ENCODE measurements at regions of chr16 and their contacts with region 1.

Region 1: DNA sequence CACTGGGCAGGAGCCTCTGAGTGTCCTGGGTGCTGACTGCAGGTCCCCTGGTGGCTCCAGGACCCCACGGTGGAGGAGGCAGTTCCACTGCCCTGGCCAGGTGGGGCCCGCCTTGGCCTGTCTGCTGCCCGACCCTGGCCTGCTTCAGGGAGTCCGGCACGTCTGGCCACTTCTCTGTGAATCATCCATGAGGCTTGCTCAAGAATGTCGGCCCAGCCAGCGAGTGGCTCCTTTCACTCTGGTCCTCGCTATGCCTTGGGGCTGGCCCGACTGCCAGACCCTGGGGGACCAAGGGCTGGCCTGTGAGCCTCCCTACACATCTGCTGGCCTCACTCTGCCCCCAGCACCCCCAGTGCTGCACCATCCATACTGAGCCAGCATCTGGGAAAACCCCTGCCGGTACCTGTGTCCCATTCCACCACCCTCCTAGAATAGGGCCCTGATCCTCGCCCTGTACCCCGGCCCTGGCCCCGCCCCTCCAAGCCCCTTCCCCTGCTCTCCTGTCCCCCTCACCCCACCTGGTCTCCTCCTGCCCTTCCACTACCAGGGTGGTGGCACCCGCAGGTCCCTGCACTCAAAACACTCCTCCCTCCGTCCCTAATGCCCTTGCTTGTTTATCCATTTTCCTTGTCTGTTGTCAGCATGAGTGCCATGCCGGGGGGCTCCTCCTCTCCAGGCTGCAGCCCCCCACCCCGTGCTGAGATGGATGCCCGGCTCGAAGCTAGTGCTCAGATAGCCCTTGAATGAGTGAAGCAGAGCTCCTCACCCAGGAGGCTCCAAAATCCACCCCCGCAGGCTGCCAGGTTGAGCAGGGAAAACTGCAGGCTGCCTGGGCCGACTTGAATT is 35.5 kb downstream of the ADCY7 start:
- DNase-seq: peak; percentile 45 to 59 (median 56)
- ATAC-seq: peak in 1 of 2 donors; percentile 26
- H3K4me3 ChIP-seq: no peak overlapping the region
- H3K27ac ChIP-seq: no peak overlapping the region
- H3K4me1 ChIP-seq: no peaks in the 10 kb centered on the region
- H3K27me3 ChIP-seq: no peaks in the 10 kb centered on the region

Region 2: DNA sequence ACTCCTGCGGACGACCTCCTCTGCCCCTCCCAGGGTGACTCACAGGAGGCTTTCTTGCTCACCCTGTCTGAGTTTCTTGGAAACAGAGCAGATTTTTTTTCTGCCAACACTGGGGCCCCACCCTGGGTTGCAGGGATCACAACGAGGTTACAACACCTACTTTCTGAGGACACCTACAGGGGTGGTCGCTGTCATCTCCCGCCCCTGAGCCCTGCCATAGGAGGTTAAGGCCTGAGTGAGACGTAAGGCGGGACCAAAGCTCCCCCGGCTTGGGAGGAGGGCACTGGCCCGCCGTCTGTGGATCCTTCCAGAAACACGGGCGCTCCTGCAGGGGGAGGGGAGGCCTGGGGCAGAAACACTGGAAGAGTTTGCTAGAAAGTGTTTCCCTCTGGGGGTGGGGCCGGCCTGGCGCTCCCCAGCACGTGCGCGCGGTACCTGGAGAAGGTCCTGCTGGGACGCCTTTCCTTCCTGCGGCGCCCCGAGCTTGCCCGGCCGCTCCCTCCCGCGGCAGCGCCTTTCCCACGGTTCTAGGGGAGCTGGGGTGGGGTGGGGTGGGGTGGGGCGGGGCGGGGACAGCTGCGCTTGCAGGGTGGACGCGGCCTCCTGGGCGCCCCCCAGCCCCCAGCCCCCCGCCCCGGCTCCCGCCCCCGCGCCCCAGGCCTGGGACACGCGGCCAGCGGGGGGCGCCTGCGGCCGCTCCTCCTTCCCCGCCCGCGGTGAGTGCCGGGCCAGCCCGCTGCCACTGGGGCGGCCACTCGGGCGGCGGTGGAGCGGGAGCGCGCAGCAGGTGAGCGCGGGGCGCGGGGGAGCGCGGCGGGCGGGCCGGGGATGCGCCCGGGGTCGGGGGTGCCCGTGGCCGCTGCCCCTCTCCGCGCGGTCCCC is 56.2 kb before region 1 on chr16:
- intact Hi-C with region 1: loop called in 1 of 4 experiments (anchors 10 kb)
- DNase-seq: peak; percentile 63 to 81 (median 80)
- ATAC-seq: peak; percentile 77 to 86
- H3K4me3 ChIP-seq: peak overlapping the region; percentile 68
- H3K27ac ChIP-seq: no peak overlapping the region
- H3K4me1 ChIP-seq: no peaks in the 10 kb centered on the region
- H3K27me3 ChIP-seq: no peaks in the 10 kb centered on the region